AG04450 (cell line): ENCODE measurements at regions of chr4 and their contacts with region 1.

Region 1: GRCh38 chr4:108018040-108018883 is 28.6 kb downstream of the HADH start:
- DNase-seq: peak; percentile 55
- H3K4me3 ChIP-seq: no peak overlapping the region
- H3K27ac ChIP-seq: no peak overlapping the region
- H3K27me3 ChIP-seq: no peaks in the 10 kb centered on the region
- CTCF ChIP-seq: peak; percentile 90

Region 2: GRCh38 chr4:108030332-108030731 is 12.1 kb after region 1 on chr4:
- CTCF ChIA-PET with region 1: interaction called, 35 read pairs
- POLR2A ChIA-PET with region 1: no interaction called
- DNase-seq: peak; percentile 24
- H3K4me3 ChIP-seq: no peak overlapping the region
- H3K27ac ChIP-seq: no peak overlapping the region
- H3K27me3 ChIP-seq: no peaks in the 10 kb centered on the region
- CTCF ChIP-seq: peak; percentile 64

Region 3: DNA sequence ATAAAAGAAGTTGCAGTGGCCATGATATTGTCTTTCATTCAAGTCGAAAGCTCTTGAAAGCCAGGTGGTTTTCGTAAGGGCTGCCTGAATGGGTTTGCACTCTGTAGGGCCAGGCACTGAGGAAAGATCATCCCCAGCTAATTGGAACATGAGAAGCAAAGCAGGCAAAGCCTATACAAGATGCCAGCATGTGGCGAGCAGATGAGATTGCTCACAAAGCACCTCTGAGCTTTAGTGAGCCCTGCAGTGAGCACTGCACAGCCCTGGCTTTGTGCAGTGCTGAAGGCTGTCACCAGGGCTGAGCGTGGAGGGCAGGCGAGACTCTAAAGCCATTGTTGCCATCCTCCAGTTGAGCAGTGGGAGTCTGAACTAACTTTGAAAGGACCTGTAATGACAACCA is 25.3 kb after region 1 on chr4:
- CTCF ChIA-PET with region 1: interaction called, 10 read pairs
- POLR2A ChIA-PET with region 1: no interaction called
- DNase-seq: no peak
- H3K4me3 ChIP-seq: no peak overlapping the region
- H3K27ac ChIP-seq: no peak overlapping the region
- H3K27me3 ChIP-seq: no peaks in the 10 kb centered on the region
- CTCF ChIP-seq: no peak

Region 4: DNA sequence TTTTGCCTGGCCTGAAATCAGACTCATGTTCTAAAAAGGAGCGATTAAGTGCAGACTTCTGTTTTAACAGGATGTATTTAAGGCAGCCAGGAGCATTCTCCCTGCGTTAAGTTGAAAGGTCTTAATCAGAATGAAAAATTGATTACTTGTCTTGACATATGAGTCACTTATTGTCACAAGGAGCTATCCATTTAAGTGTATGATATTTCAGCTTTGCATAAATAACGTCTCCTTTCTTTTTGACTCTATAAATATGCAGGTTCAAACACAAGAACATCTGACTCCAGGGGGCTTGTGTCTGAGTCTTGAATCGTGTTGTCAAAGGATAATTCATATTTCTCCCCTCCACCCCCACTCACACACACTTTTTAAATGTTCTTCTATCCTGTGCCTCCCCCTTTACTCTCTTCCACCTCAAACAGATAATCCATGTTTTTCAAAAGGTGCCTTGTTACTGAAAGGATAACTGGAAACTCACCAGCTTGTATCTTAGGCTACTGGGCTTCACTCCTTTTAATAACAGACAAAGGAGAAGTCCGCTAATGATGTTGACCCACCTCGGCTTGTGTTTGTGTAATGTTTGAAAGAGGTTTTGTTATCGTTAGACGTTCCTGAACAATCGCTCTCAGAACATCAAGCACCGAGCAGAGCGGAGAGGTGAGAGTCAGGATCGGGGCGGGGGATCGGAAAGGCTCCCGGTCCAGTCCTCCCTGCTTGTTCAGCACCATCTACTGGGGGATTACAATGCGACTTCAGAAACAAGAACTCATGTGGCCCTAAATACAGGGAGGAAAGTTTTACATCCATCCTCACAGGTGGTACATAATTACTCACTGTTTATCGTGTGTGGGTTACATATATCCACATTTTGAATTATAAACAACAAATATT is 494.6 kb after region 1 on chr4:
- CTCF ChIA-PET with region 1: interaction called, 16 read pairs
- POLR2A ChIA-PET with region 1: no interaction called
- DNase-seq: peak; percentile 20
- H3K4me3 ChIP-seq: no peak overlapping the region
- H3K27ac ChIP-seq: no peak overlapping the region
- H3K27me3 ChIP-seq: peaks cover 9% of the 10 kb centered on the region
- CTCF ChIP-seq: peak; percentile 65

Region 5: GRCh38 chr4:108581083-108581482 is 562.8 kb after region 1 on chr4:
- CTCF ChIA-PET with region 1: interaction called, 12 read pairs
- POLR2A ChIA-PET with region 1: no interaction called
- DNase-seq: no peak
- H3K4me3 ChIP-seq: no peak overlapping the region
- H3K27ac ChIP-seq: no peak overlapping the region
- H3K27me3 ChIP-seq: no peaks in the 10 kb centered on the region
- CTCF ChIP-seq: no peak